Activated T-helper 2 cell treated with anti-CD3 and anti-CD28 coated beads, Interferon-gamma antibody, Interleukin-2, Interleukin-4, amounts not matched to agents 10 μg/mL and 5 μg/mL and 100 μg/mL, durations not matched to agents 14 hours and 24 hours and 36 hours (primary cell): ENCODE measurements at regions of chr17 and their contacts with region 1.

Region 1: GRCh38 chr17:43483674-43484372 is at the start of gene DHX8:
- DNase-seq: peak; percentile 98
- H3K4me3 Mint-ChIP-seq: peak within 1 kb of the TSS; percentile 100
- H3K27ac Mint-ChIP-seq: peak within 1 kb of the TSS; percentile 96
- H3K4me1 Mint-ChIP-seq: peaks cover 17% of the 10 kb centered on the region
- H3K27me3 Mint-ChIP-seq: no peaks in the 10 kb centered on the region
- total RNA-seq, gene DHX8: 53.2 and 56.8 TPM in 2 replicates

Region 2: GRCh38 chr17:43024407-43025289 is 459.2 kb before region 1 on chr17 and contains the start of gene RND2:
- intact Hi-C with region 1: loop called (anchors 5 kb)
- DNase-seq: peak; percentile 69
- H3K4me3 Mint-ChIP-seq: peak within 1 kb of the TSS; percentile 90
- H3K27ac Mint-ChIP-seq: peak within 1 kb of the TSS; percentile 84
- H3K4me1 Mint-ChIP-seq: peaks cover 16% of the 10 kb centered on the region
- H3K27me3 Mint-ChIP-seq: peaks cover 11% of the 10 kb centered on the region
- total RNA-seq, gene RND2: 0.05 TPM in 1 of 2 replicates, not detected in the other

Region 3: GRCh38 chr17:43324205-43324893 is 159.5 kb before region 1 on chr17:
- intact Hi-C with region 1: no loop called
- DNase-seq: no peak
- H3K4me3 Mint-ChIP-seq: no peak overlapping the region
- H3K27ac Mint-ChIP-seq: no peak overlapping the region
- H3K4me1 Mint-ChIP-seq: peaks cover 23% of the 10 kb centered on the region
- H3K27me3 Mint-ChIP-seq: peaks cover 19% of the 10 kb centered on the region

Region 4: DNA sequence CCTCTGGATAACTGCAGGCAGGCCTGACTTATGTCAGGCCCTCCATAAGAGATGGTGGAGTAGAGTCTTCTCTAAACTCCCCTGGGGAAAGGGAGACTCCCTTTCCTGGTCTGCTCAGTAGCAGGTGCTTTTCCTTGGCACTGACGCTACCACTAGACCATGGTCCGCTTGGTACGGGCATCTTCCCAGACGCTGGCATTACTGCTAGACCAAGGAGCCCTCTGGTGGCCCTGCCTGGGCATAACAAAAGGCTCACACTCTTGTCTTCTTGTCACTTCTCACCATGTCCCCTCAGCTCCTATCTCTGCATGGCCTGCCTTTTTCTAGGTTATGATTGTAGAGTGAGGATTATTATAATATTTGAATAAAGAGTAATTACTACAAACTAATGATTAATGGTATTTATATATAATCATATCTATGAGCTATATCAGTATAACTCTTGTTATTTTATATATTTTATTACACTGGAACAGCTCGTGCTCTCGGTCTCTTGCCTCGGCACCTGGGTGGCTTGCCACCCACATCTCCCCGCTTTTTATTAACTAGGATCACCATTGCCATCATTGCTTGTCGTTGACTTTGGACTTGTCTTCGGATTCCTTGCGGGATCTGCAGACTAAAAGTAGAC is 144.8 kb before region 1 on chr17:
- intact Hi-C with region 1: loop called (anchors 5 kb)
- DNase-seq: peak; percentile 46
- H3K4me3 Mint-ChIP-seq: no peak overlapping the region
- H3K27ac Mint-ChIP-seq: no peak overlapping the region
- H3K4me1 Mint-ChIP-seq: peaks cover 35% of the 10 kb centered on the region
- H3K27me3 Mint-ChIP-seq: no peaks in the 10 kb centered on the region

Region 5: GRCh38 chr17:43367737-43368242 is 116.0 kb before region 1 on chr17:
- intact Hi-C with region 1: loop called (anchors 1 kb)
- DNase-seq: peak; percentile 57
- H3K4me3 Mint-ChIP-seq: peak overlapping the region; percentile 86
- H3K27ac Mint-ChIP-seq: peak overlapping the region; percentile 100
- H3K4me1 Mint-ChIP-seq: peaks cover 54% of the 10 kb centered on the region
- H3K27me3 Mint-ChIP-seq: no peaks in the 10 kb centered on the region

Region 6: DNA sequence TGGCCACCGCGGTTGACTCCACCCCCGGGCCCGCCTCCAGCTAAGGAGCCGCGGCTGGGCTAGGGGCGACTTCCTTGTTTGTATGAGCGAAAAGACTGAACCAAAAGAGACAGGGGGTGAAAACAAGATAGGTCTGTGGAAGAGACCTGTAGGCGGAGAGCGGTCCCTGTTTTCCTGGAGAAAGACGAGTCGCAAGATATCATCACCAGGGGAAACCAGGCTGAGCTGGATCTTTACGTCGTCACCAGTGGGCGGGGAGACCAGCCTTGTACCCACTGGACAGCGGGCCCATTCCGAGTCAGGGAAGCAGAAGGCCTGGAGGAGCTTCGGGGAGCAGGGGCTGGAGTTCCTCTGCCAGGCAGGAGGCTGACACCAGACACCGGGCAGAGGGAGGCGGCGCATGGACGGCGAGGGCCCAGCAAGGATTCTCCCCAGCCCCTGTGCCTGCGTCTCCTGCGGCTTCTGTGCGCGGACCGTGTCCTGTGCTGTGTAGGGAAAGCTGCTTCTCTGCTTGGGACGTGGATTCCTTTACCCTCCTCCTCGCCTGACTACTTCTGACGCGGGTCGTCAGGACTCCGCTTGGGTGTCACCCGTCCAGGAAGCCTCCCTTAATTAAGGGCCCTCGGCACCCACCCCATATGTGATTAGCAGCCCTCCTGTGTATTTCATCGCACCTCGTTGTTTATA is 95.3 kb before region 1 on chr17:
- intact Hi-C with region 1: loop called (anchors 1 kb)
- DNase-seq: peak; percentile 89
- H3K4me3 Mint-ChIP-seq: peak overlapping the region; percentile 88
- H3K27ac Mint-ChIP-seq: peak overlapping the region; percentile 94
- H3K4me1 Mint-ChIP-seq: peaks cover 20% of the 10 kb centered on the region
- H3K27me3 Mint-ChIP-seq: no peaks in the 10 kb centered on the region

Region 7: DNA sequence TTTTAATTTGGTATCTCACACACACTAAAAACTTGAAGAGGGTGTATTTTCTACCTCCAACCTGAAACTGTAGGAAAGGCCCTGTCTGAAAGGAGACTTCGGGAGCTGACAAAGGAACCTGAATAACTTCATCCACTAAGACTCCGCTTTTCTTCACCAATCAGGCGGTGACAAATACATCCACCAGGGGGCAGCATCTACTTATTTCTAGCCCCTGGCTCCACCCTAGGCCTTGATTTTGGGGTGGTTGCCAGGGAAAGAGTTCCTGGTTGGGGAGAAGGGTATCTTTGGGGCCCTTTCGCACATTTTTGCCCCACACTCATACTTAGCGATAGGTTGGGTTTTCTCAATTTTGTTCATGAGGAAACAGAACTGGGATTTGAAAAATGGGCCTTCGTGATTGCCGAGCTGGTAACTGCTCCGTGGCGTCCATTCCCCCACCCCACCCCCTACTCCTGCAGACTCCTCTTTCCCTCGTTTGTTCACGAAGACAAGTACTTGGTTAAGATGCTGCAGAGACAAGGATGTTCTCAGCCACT is 89.8 kb before region 1 on chr17:
- intact Hi-C with region 1: loop called (anchors 1 kb)
- DNase-seq: peak; percentile 81
- H3K4me3 Mint-ChIP-seq: no peak overlapping the region
- H3K27ac Mint-ChIP-seq: peak overlapping the region; percentile 2
- H3K4me1 Mint-ChIP-seq: peaks cover 27% of the 10 kb centered on the region
- H3K27me3 Mint-ChIP-seq: no peaks in the 10 kb centered on the region

Region 8: DNA sequence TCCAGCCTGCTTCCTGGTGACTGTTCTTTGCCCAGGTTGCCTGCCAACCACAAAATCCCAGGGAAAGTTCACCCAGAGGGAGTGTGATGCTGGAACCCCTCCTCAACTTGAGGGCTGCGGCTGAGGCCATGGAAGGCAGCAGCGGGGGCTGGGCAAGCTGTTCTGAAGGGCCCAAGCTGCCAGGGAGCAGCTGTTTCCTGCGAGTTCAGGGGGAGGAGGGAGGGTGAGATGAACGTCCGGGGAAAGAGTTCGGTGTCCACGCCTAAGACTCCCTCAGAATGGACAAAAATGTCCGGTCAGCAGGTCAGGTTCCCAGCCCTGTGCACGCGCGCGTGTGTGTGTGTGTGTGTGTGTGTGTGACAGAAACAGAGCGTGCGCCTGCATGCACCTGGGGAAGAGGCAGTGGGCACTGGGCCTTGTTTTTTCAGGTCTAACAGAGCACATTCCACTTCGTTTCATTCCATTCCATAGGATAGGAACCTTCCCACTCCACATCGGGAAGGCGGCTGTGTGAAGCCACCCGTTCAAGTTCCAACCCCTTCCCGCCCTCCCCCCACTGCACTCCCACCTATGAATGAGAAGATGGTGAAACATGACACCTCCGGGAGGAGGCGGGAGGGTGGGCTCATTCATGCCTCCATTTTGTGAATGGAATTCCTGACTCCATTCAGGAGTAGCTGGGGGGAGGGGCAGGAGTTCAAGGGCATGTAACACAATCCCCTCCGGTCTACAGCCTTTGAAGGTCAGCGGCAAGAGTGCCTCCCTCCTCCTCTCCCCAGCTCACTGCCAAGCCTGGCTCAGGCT is 46.7 kb after region 1 on chr17:
- intact Hi-C with region 1: no loop called
- DNase-seq: no peak
- H3K4me3 Mint-ChIP-seq: no peak overlapping the region
- H3K27ac Mint-ChIP-seq: no peak overlapping the region
- H3K4me1 Mint-ChIP-seq: no peaks in the 10 kb centered on the region
- H3K27me3 Mint-ChIP-seq: no peaks in the 10 kb centered on the region

Region 9: DNA sequence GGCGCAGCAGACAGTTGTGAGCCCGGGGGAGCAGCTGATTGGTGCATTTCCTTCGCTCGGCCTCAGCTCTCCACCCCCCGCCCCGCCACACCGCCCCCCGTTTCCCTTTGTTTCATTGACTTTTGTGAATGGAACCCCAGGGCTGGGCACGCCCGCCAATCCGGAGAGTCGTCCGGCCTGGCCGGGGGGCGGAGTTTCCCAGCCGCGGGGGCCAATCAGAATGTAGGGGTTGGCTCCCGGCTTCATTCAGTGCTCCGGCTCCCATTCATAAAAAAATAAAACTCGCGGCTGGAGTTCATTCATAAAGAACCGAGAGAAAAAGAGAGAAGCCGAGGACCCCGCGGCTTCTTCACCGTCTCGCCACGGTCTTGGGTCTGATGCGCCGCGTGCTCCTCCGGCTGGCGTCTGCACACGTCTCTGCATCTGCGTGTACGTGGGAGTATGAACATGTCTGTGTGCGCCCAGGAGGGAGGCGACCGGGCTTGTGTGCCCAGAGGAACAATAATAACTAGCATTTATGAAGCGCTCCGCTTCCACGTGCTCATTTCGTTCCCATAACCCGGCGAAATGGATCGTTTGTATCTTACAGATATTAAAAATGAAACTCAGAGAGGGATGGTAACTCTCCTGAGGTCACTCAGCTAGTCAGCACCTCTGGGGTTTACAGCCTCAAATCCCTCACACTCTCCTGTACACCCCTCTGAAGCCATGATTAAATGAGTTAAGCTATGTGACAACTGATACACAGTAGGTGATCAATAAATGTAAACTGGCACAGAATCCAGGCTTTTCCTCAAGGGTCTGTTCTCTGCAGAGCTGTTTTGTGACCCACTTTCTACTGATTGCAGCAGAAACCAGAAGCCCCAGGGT is 62.7 kb after region 1 on chr17 and contains the start of gene ETV4:
- intact Hi-C with region 1: loop called (anchors 2 kb)
- DNase-seq: peak; percentile 91
- H3K4me3 Mint-ChIP-seq: peak within 1 kb of the TSS; percentile 90
- H3K27ac Mint-ChIP-seq: peak within 1 kb of the TSS; percentile 77
- H3K4me1 Mint-ChIP-seq: peaks cover 19% of the 10 kb centered on the region
- H3K27me3 Mint-ChIP-seq: peaks cover 46% of the 10 kb centered on the region
- total RNA-seq, gene ETV4: 11.0 and 12.8 TPM in 2 replicates

Region 10: GRCh38 chr17:43584666-43585102 is 100.9 kb after region 1 on chr17:
- intact Hi-C with region 1: no loop called
- DNase-seq: no peak
- H3K4me3 Mint-ChIP-seq: no peak overlapping the region
- H3K27ac Mint-ChIP-seq: no peak overlapping the region
- H3K4me1 Mint-ChIP-seq: peaks cover 2% of the 10 kb centered on the region
- H3K27me3 Mint-ChIP-seq: peaks cover 10% of the 10 kb centered on the region